ENCODE measurements at regions of chr22 and their contacts with region 1.

Region 1: DNA sequence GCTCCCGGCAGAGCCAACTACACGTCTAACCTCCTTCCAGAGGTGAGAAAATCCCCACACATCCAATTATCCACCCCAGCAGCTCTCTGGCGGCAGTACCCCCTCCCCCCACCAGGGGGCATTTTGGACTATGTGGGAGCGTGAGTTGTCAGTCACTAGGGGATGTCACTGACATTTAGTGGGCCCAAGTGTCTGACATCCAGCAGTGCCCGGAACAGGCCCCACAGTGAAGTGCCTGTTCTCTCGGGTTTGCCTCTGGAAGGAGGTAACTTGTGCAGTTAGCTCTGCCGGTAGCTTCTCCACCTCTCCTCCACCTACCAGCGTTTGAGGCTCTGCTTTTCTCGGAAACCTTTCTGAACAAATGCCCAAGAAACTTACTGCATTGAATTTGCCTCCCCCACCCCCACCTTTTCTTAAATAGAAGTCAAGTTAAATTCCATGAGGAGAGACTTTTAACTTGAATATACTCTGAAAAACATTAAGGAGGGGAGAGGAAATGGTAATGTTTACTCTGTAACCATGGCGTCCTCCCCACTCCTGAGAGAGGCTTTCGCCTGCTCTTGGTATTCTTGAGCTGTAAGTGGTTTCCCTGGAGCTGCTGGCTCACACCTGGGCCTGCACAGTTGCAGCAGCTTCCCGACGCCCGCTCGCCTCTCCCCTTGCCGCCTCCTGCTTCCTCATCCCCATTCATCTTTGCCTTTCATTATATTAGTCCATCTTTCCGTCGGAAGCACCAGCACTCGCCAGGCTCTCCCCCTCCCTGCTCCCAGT is 112.8 kb downstream of the WNT7B start:
- DNase-seq: peak in 2 of 5 donors; percentile 44 to 60
- H3K4me3 ChIP-seq: no peak overlapping the region
- H3K27ac ChIP-seq: no peak overlapping the region
- H3K4me1 ChIP-seq: peaks cover 14% of the 10 kb centered on the region
- H3K27me3 ChIP-seq: no peaks in the 10 kb centered on the region
- CTCF ChIP-seq: peak in 2 of 3 donors; percentile 33 to 44
- EP300 ChIP-seq: no peak
- POLR2A ChIP-seq: no peak

Region 2: GRCh38 chr22:45036154-45036553 is 828.0 kb before region 1 on chr22:
- intact Hi-C with region 1: loop called in 1 of 4 experiments (anchors 10 kb)
- DNase-seq: peak; percentile 51 to 94 (median 82)
- H3K4me3 ChIP-seq: no peak overlapping the region
- H3K27ac ChIP-seq: no peak overlapping the region
- H3K4me1 ChIP-seq: peaks cover 13% of the 10 kb centered on the region
- H3K27me3 ChIP-seq: no peaks in the 10 kb centered on the region
- CTCF ChIP-seq: no peak
- EP300 ChIP-seq: no peak
- POLR2A ChIP-seq: no peak

Region 3: GRCh38 chr22:45638834-45639746 is 225.1 kb before region 1 on chr22:
- intact Hi-C with region 1: loop called in 2 of 4 experiments (anchors 5 to 10 kb)
- DNase-seq: peak in 1 of 5 donors; percentile 40
- H3K4me3 ChIP-seq: no peak overlapping the region
- H3K27ac ChIP-seq: no peak overlapping the region
- H3K4me1 ChIP-seq: no peaks in the 10 kb centered on the region
- H3K27me3 ChIP-seq: no peaks in the 10 kb centered on the region
- CTCF ChIP-seq: no peak
- EP300 ChIP-seq: no peak
- POLR2A ChIP-seq: no peak

Region 4: DNA sequence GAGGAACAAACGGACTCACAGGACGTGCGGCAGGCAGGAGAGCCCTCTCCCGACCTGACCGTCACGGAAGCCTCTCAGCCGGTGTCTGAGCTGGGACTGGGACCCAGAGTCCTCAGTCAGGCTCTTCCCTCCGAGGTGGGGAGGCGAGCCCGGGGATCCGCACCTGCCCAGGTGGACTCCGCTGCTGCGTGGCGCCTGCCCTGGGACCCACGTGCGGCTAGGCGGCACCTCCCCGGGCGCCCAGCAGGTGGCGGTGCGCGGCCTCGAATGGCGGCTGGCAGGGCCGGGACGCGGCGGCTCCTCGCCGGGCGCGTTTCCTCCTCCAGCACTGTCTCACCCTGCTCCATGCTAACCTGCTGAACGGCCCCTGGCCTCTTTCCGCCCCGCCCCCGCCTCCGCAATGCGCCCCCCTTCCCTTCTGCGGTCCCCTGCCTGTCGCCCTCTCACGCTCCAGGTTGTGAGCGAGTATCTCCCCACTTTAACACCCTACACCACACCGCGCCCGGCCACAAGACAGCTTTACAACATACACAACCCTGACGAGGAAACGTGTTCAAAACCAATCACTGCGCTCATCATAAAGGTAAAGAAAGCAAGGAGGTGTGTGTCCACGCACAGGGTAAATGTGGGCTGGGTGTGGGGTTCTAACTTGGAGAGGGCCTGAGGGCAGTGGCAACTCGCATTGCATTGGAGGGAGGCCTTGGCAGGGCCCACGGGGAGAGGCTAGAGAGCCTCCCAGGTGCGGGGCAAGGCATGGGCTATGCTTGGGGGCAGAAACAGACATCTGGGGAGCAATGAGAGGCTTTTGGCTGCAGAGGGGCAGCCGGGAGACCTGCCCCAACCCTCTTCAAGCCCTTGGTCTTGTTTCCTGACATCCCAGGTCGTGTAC is 218.4 kb before region 1 on chr22:
- intact Hi-C with region 1: loop called in 2 of 4 experiments (anchors 5 to 10 kb)
- DNase-seq: peak; percentile 54 to 84 (median 73)
- H3K4me3 ChIP-seq: no peak overlapping the region
- H3K27ac ChIP-seq: no peak overlapping the region
- H3K4me1 ChIP-seq: no peaks in the 10 kb centered on the region
- H3K27me3 ChIP-seq: no peaks in the 10 kb centered on the region
- CTCF ChIP-seq: peak; percentile 72 to 94 (median 91)
- EP300 ChIP-seq: no peak
- POLR2A ChIP-seq: no peak